ENCODE measurements at regions of chr11 and their contacts with region 1.

Region 1: GRCh38 chr11:112113539-112114457 is 27.1 kb downstream of the SDHD start:
- DNase-seq: no peak
- ATAC-seq: peak; percentile 87
- H3K4me3 ChIP-seq: no peak overlapping the region
- H3K4me1 ChIP-seq: no peaks in the 10 kb centered on the region
- CTCF ChIP-seq: peak; percentile 47

Region 2: GRCh38 chr11:112174789-112175598 is 61.2 kb after region 1 on chr11 and contains the start of gene BCO2:
- intact Hi-C with region 1: loop called (anchors 10 kb)
- DNase-seq: peak; percentile 73 to 90 (median 75)
- ATAC-seq: peak; percentile 97
- H3K4me3 ChIP-seq: no peak within 1 kb of the TSS
- H3K4me1 ChIP-seq: peaks cover 3% of the 10 kb centered on the region
- CTCF ChIP-seq: peak; percentile 53
- total RNA-seq, gene BCO2: 3.7 to 9.8 (median 7.1) TPM